ENCODE measurements at regions of chr12 and their contacts with region 1.

Region 1: DNA sequence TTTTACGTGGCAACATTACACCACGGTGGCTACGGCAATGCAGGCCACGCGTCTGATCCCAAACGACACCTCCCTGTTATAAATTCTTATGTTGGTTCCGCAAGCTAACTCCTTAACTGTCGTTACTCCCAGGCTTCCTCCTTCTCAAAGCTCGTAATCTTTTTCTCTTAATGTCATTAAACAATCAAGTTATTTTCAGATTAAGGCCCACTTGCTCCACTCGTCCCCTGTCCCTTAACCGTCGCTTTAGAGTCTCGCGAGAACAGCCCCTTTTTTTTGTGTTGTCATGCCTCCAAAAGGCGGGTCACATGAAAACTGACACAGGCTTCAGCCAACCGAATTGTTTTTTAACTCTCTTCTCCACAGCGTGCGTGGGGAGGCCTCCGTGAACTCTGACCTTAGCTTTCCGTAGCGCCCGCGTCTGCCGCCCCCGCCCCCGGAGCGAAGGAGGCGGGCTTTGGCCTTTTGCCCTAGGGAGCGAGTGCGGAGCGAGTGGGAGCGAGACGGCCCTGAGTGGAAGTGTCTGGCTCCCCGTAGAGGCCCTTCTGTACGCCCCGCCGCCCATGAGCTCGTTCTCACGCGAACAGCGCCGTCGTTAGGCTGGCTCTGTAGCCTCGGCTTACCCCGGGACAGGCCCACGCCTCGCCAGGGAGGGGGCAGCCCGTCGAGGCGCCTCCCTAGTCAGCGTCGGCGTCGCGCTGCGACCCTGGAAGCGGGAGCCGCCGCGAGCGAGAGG is at the start of gene CAND1:
- DNase-seq: peak; percentile 93 to 99 (median 98)
- ATAC-seq: peak; percentile 89
- H3K4me3 ChIP-seq: peak within 1 kb of the TSS; percentile 69
- H3K4me3 Mint-ChIP-seq: peak within 1 kb of the TSS; percentile 80 to 99 (median 95)
- H3K27ac ChIP-seq: peak within 1 kb of the TSS; percentile 91
- H3K27ac Mint-ChIP-seq: peak within 1 kb of the TSS; percentile 97 to 100 (median 99)
- H3K4me1 ChIP-seq: peaks cover 22 to 26% of the 10 kb centered on the region in 2 donors
- H3K4me1 Mint-ChIP-seq: peaks cover 22 to 55% (median 52%) of the 10 kb centered on the region in 7 donors
- H3K27me3 ChIP-seq: no peaks in the 10 kb centered on the region
- H3K27me3 Mint-ChIP-seq: no peaks in the 10 kb centered on the region
- total RNA-seq, gene CAND1: 83.2 to 160 (median 111) TPM

Region 2: GRCh38 chr12:65631621-65632111 is 1637.4 kb before region 1 on chr12:
- CTCF ChIA-PET with region 1: no interaction called
- POLR2A ChIA-PET with region 1: no interaction called
- intact Hi-C with region 1: no loop called
- DNase-seq: no peak
- ATAC-seq: no peak
- H3K4me3 ChIP-seq: no peak overlapping the region
- H3K4me3 Mint-ChIP-seq: no peak overlapping the region
- H3K27ac ChIP-seq: no peak overlapping the region
- H3K27ac Mint-ChIP-seq: no peak overlapping the region
- H3K4me1 ChIP-seq: no peaks in the 10 kb centered on the region
- H3K4me1 Mint-ChIP-seq: no peaks in the 10 kb centered on the region
- H3K27me3 ChIP-seq: no peaks in the 10 kb centered on the region
- H3K27me3 Mint-ChIP-seq: peaks cover 0 to 22% (median 4%) of the 10 kb centered on the region in 5 donors

Region 3: DNA sequence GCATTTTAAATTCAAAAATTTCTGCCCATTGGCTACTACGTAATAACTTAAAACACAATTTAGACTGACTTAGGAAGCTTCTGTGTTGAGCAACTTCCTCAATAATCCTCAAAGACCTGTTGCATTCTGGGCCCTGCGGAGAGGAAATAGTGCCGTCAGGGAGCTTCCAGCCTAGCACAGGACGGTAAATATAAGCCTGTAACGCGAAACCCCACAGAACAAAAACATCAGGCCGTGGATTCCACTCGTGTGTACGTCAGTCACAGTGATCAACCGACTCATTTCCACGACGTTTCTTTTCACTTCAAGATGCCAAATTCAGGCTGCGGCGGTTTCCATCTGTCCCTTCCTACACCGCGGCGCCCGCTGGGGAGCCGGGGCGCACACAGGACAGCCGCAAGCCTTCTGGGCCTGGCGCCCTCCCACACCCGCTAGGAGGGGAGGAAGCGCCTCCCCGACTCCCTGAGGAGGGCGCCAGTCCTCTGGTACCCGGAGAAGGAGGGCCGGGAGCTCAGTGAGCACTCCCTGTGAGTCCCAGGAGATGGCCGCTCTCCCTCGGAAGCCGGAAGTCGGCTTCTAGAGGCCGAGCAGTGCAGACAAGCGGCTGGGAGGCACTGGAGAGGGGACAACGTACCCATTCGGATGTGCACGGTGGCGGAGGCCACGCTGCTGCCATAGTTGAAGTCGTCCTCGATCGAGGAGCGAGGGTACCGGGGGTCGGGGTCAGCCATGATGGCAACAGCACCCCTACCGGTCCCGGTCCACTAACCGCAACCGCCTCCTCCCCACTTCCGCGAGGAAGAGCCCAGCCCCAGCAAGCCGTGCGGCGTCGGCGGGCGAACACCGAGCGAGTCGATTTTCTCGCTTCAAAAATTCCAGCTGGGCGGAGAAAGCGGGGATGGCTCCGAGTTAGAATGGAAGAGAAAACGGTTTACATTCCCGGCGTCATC is 1099.6 kb before region 1 on chr12 and contains the start of gene TMBIM4:
- CTCF ChIA-PET with region 1: no interaction called
- POLR2A ChIA-PET with region 1: interaction called, 8 read pairs
- intact Hi-C with region 1: loop called in 1 of 2 experiments (anchors 1 kb)
- DNase-seq: peak; percentile 68 to 91 (median 86)
- ATAC-seq: peak; percentile 85
- H3K4me3 ChIP-seq: peak within 1 kb of the TSS; percentile 80
- H3K4me3 Mint-ChIP-seq: peak within 1 kb of the TSS; percentile 89 to 100 (median 95)
- H3K27ac ChIP-seq: peak within 1 kb of the TSS; percentile 97
- H3K27ac Mint-ChIP-seq: peak within 1 kb of the TSS; percentile 94 to 98 (median 97)
- H3K4me1 ChIP-seq: peaks cover 10 to 24% of the 10 kb centered on the region in 2 donors
- H3K4me1 Mint-ChIP-seq: peaks cover 38 to 62% (median 52%) of the 10 kb centered on the region in 7 donors
- H3K27me3 ChIP-seq: no peaks in the 10 kb centered on the region
- H3K27me3 Mint-ChIP-seq: no peaks in the 10 kb centered on the region
- total RNA-seq, gene TMBIM4: 38.6 to 88.0 (median 79.8) TPM

Region 4: DNA sequence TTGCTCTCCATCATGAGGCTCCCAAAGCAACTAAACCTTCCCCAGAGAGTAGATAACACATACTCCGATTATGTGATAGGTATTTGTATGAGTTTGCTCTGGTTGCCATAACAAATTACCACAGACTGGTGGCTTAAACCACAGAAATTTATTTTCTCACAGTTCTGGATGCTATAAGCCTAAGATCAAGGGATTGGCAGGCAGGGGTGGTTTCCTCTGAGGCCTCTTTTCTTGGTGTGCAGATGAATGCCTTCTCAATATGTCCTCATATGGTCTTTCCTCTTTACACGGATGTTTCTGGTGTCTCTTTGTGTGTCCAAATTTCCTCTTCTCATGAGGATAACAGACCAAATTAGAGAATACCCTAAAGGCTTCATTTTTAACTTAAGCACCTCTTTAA is 304.4 kb before region 1 on chr12:
- CTCF ChIA-PET with region 1: no interaction called
- POLR2A ChIA-PET with region 1: no interaction called
- intact Hi-C with region 1: no loop called
- DNase-seq: peak in 7 of 9 donors; percentile 61 to 91 (median 84)
- ATAC-seq: peak; percentile 95
- H3K4me3 ChIP-seq: no peak overlapping the region
- H3K4me3 Mint-ChIP-seq: peak overlapping the region in 9 of 10 donors; percentile 8 to 74 (median 71)
- H3K27ac ChIP-seq: peak overlapping the region; percentile 62
- H3K27ac Mint-ChIP-seq: peak overlapping the region in 8 of 9 donors; percentile 85 to 99 (median 93)
- H3K4me1 ChIP-seq: peaks cover 8 to 18% of the 10 kb centered on the region in 2 donors
- H3K4me1 Mint-ChIP-seq: peaks cover 8 to 52% (median 35%) of the 10 kb centered on the region in 7 donors
- H3K27me3 ChIP-seq: no peaks in the 10 kb centered on the region
- H3K27me3 Mint-ChIP-seq: peaks cover 0 to 5% (median 0%) of the 10 kb centered on the region in 5 donors

Region 5: DNA sequence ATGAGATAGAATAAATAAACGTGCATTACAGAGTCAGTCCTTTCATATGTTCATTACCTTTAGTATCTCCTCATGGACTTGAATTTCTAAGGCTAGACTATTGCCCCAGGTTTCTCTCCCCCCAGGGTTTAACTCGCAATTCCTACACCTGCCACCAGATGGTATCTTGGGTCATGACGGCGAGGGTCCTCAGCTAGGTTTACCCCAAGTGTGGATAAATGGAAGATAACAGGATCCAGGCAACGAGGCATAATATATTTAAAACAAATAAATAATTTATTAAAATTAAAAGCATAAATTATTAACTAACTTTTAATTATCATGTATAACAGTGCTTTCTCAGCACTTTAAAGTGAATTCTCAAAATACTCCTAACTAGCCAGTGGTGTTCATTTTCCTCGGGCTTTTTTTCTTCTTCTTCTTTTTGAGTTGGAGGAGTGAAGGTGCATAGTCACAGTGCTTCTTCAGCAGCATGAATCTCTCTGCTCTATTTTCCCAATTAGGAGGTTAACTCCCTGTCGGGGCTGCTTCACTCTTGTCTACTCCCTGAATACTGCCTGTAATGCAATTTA is 243.4 kb before region 1 on chr12:
- CTCF ChIA-PET with region 1: no interaction called
- POLR2A ChIA-PET with region 1: no interaction called
- intact Hi-C with region 1: loop called in 1 of 2 experiments (anchors 5 kb)
- DNase-seq: peak in 8 of 9 donors; percentile 8 to 42 (median 27)
- ATAC-seq: peak; percentile 64
- H3K4me3 ChIP-seq: no peak overlapping the region
- H3K4me3 Mint-ChIP-seq: no peak overlapping the region
- H3K27ac ChIP-seq: no peak overlapping the region
- H3K27ac Mint-ChIP-seq: peak overlapping the region in 1 of 9 donors; percentile 21
- H3K4me1 ChIP-seq: no peaks in the 10 kb centered on the region
- H3K4me1 Mint-ChIP-seq: peaks cover 0 to 12% (median 0%) of the 10 kb centered on the region in 7 donors
- H3K27me3 ChIP-seq: no peaks in the 10 kb centered on the region
- H3K27me3 Mint-ChIP-seq: peaks cover 0 to 15% (median 10%) of the 10 kb centered on the region in 5 donors

Region 6: DNA sequence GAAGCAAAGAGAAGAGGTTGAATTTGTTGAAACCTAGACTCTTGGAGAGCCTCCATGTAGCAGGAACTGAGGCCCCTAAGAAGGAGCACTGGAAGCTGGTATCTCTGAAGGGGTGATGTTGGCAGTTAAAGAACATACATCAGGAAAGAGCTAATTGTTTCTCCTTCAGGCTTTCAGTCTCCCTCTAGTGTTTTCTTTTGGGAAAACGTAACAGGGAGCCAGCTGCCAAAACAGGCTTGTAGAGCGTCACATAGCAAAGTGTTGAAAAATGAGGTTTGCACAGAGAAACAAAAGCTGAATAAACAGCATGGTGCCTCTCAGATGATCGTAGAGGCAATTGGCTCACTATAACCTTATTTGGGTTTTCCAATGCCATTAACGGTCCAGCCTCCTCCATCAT is 46.8 kb before region 1 on chr12:
- CTCF ChIA-PET with region 1: no interaction called
- POLR2A ChIA-PET with region 1: no interaction called
- intact Hi-C with region 1: no loop called
- DNase-seq: no peak
- ATAC-seq: no peak
- H3K4me3 ChIP-seq: no peak overlapping the region
- H3K4me3 Mint-ChIP-seq: no peak overlapping the region
- H3K27ac ChIP-seq: no peak overlapping the region
- H3K27ac Mint-ChIP-seq: no peak overlapping the region
- H3K4me1 ChIP-seq: no peaks in the 10 kb centered on the region
- H3K4me1 Mint-ChIP-seq: no peaks in the 10 kb centered on the region
- H3K27me3 ChIP-seq: no peaks in the 10 kb centered on the region
- H3K27me3 Mint-ChIP-seq: peaks cover 0 to 5% (median 0%) of the 10 kb centered on the region in 5 donors

Region 7: DNA sequence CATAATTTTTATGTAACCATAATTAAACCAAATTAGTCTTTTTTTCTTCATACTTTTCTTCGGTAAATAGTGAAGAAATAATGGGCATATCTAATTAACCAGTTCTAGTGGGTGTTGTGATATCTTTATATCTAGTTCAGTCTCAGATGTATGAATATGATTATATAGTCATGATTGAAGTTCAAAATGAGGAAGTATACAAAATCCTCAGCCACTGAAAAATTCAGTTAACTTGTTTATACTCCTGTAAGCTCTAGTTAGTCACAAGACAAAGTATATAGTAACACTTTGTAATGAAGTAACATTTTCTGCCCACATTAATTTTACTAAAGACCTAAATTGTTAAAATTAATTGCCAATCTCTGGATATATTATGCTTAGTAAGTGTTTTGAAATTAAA is 46.6 kb after region 1 on chr12:
- CTCF ChIA-PET with region 1: no interaction called
- POLR2A ChIA-PET with region 1: interaction called, 3 read pairs
- intact Hi-C with region 1: loop called in 1 of 2 experiments (anchors 5 kb)
- DNase-seq: no peak
- ATAC-seq: no peak
- H3K4me3 ChIP-seq: no peak overlapping the region
- H3K4me3 Mint-ChIP-seq: peak overlapping the region in 1 of 10 donors; percentile 12
- H3K27ac ChIP-seq: no peak overlapping the region
- H3K27ac Mint-ChIP-seq: peak overlapping the region in 3 of 9 donors; percentile 31 to 42 (median 38)
- H3K4me1 ChIP-seq: no peaks in the 10 kb centered on the region
- H3K4me1 Mint-ChIP-seq: peaks cover 0 to 10% (median 7%) of the 10 kb centered on the region in 7 donors
- H3K27me3 ChIP-seq: no peaks in the 10 kb centered on the region
- H3K27me3 Mint-ChIP-seq: no peaks in the 10 kb centered on the region

Region 8: GRCh38 chr12:67943226-67943892 is 674.3 kb after region 1 on chr12:
- CTCF ChIA-PET with region 1: no interaction called
- POLR2A ChIA-PET with region 1: interaction called, 3 read pairs
- intact Hi-C with region 1: loop called in 1 of 2 experiments (anchors 5 kb)
- DNase-seq: peak; percentile 10 to 76 (median 64)
- ATAC-seq: peak; percentile 81
- H3K4me3 ChIP-seq: no peak overlapping the region
- H3K4me3 Mint-ChIP-seq: no peak overlapping the region
- H3K27ac ChIP-seq: no peak overlapping the region
- H3K27ac Mint-ChIP-seq: no peak overlapping the region
- H3K4me1 ChIP-seq: no peaks in the 10 kb centered on the region
- H3K4me1 Mint-ChIP-seq: peaks cover 0 to 6% (median 0%) of the 10 kb centered on the region in 7 donors
- H3K27me3 ChIP-seq: no peaks in the 10 kb centered on the region
- H3K27me3 Mint-ChIP-seq: peaks cover 0 to 18% (median 0%) of the 10 kb centered on the region in 5 donors

Region 9: GRCh38 chr12:68610370-68611093 is 1341.5 kb after region 1 on chr12 and contains the start of gene RAP1B:
- CTCF ChIA-PET with region 1: no interaction called
- POLR2A ChIA-PET with region 1: no interaction called
- intact Hi-C with region 1: loop called (anchors 2 to 5 kb)
- DNase-seq: peak; percentile 86 to 92 (median 89)
- ATAC-seq: peak; percentile 92
- H3K4me3 ChIP-seq: peak within 1 kb of the TSS; percentile 89
- H3K4me3 Mint-ChIP-seq: peak within 1 kb of the TSS; percentile 93 to 99 (median 98)
- H3K27ac ChIP-seq: peak within 1 kb of the TSS; percentile 97
- H3K27ac Mint-ChIP-seq: peak within 1 kb of the TSS; percentile 95 to 99 (median 98)
- H3K4me1 ChIP-seq: peaks cover 15 to 18% of the 10 kb centered on the region in 2 donors
- H3K4me1 Mint-ChIP-seq: peaks cover 36 to 46% (median 41%) of the 10 kb centered on the region in 7 donors
- H3K27me3 ChIP-seq: no peaks in the 10 kb centered on the region
- H3K27me3 Mint-ChIP-seq: no peaks in the 10 kb centered on the region
- total RNA-seq, gene RAP1B: 202 to 287 (median 223) TPM

Region 10: DNA sequence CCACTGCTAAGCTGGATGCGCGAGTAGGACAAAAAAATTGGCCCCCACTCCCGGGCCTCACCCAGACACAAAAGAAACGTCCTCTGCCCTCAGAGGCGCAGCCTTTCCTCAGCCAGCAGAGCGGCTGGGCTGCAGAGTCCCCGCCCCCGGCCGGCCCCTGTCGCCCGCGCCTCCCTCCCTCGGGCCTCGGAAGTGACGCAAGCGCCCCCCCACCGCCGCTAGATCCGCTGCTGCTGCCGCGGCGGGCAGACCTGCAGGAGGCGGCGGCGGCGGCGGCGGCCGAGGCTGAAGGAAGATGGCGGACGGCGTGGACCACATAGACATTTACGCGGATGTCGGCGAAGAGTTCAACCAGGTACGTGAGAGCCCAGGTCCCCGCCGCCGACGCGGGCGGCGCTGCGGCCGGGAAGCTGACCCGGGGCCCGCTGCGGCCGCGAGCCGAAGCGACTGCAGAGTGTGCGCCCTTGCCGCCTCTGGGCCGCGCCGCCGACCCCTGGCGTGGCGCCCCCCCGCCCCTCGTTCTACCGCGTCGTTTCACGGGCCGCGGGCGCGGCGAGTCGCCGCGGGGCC is 1970.4 kb after region 1 on chr12 and contains the start of gene CPSF6:
- CTCF ChIA-PET with region 1: no interaction called
- POLR2A ChIA-PET with region 1: no interaction called
- intact Hi-C with region 1: loop called in 1 of 2 experiments (anchors 1 kb)
- DNase-seq: peak; percentile 93 to 97 (median 95)
- ATAC-seq: peak; percentile 96
- H3K4me3 ChIP-seq: peak within 1 kb of the TSS; percentile 86
- H3K4me3 Mint-ChIP-seq: peak within 1 kb of the TSS; percentile 94 to 100 (median 98)
- H3K27ac ChIP-seq: peak within 1 kb of the TSS; percentile 90
- H3K27ac Mint-ChIP-seq: peak within 1 kb of the TSS; percentile 96 to 100 (median 99)
- H3K4me1 ChIP-seq: peaks cover 32 to 37% of the 10 kb centered on the region in 2 donors
- H3K4me1 Mint-ChIP-seq: peaks cover 32 to 58% (median 54%) of the 10 kb centered on the region in 7 donors
- H3K27me3 ChIP-seq: no peaks in the 10 kb centered on the region
- H3K27me3 Mint-ChIP-seq: no peaks in the 10 kb centered on the region
- total RNA-seq, gene CPSF6: 86.8 to 127 (median 96.5) TPM